Activated naive CD4-positive, alpha-beta T cell treated with anti-CD3 and anti-CD28 coated beads for 36 hours (primary cell): ENCODE measurements at regions of chr20 and their contacts with region 1.

Region 1: DNA sequence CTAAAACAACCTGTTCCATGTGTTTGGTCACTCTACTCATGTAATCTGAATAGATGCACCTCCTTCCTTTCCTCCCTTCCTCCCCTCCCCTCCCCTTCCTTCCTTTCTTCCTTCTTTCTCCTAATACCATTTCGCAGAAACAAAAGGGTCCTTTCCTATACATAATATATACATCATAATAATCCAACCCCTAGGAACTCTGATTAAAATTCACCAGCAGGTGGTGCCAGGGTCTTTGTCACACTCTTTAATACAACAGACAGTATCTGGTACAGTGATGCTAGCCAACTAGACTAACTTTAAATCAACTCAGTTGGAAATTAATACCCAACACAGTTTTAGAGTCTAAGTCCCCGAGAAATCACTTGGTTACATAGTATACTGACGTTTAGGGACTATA is 181.2 kb upstream of the SHLD1 start:
- DNase-seq: peak; percentile 78
- H3K4me3 Mint-ChIP-seq: no peak overlapping the region
- H3K27ac Mint-ChIP-seq: peak overlapping the region; percentile 82
- H3K4me1 Mint-ChIP-seq: peaks cover 31% of the 10 kb centered on the region
- H3K27me3 Mint-ChIP-seq: no peaks in the 10 kb centered on the region

Region 2: GRCh38 chr20:5557123-5557522 is 11.9 kb before region 1 on chr20:
- CTCF ChIA-PET with region 1: interaction called, 34 read pairs
- intact Hi-C with region 1: no loop called
- DNase-seq: peak; percentile 80
- H3K4me3 Mint-ChIP-seq: no peak overlapping the region
- H3K27ac Mint-ChIP-seq: peak overlapping the region; percentile 67
- H3K4me1 Mint-ChIP-seq: peaks cover 4% of the 10 kb centered on the region
- H3K27me3 Mint-ChIP-seq: no peaks in the 10 kb centered on the region

Region 3: GRCh38 chr20:5580936-5581708 is 12.1 kb after region 1 on chr20:
- CTCF ChIA-PET with region 1: interaction called, 11 read pairs
- intact Hi-C with region 1: no loop called
- DNase-seq: no peak
- H3K4me3 Mint-ChIP-seq: no peak overlapping the region
- H3K27ac Mint-ChIP-seq: no peak overlapping the region
- H3K4me1 Mint-ChIP-seq: peaks cover 17% of the 10 kb centered on the region
- H3K27me3 Mint-ChIP-seq: no peaks in the 10 kb centered on the region

Region 4: DNA sequence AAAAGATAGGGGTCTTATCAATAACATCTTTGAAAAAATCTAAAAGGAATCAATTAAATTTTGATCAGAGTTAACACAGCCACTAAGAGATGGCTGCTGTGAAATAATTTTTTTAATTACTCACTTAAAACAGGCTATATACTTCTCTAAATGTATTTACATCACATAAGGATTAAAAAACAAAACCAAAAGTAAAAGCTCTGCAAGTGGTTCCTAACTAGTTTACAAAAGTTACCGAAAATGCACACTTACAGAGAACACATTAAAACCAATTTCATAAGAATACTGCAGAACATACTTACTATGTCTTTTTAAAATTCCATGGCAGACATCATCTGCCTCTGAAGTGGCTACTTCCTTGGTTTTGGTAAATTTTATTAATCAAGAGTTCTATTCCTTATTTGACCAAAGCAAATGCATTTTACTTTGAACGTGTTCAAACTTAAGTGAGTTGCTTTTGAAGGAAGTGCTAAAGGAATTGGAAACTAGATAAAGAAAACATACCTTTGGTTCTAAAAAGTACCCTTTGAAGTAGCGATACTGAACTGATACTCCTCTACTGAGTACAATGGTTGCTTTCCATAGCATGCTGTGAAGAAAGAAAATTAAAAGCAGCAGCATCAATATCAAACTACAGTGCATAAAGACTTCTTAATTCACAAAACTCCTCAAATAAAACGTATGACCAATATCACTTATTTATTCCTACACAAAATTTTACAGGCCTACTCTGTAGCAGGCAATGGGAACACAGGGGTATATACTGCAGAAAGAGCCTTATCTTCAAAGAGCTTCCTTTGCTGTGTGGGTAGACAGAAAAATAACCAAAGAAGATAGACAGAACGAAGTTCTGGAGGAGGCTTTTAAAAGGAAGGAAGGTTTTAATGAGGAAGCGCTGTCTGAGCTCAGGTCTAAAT is 24.1 kb after region 1 on chr20:
- CTCF ChIA-PET with region 1: interaction called, 4 read pairs
- intact Hi-C with region 1: loop called (anchors 1 kb)
- DNase-seq: no peak
- H3K4me3 Mint-ChIP-seq: peak overlapping the region; percentile 69
- H3K27ac Mint-ChIP-seq: peak overlapping the region; percentile 95
- H3K4me1 Mint-ChIP-seq: peaks cover 78% of the 10 kb centered on the region
- H3K27me3 Mint-ChIP-seq: no peaks in the 10 kb centered on the region

Region 5: DNA sequence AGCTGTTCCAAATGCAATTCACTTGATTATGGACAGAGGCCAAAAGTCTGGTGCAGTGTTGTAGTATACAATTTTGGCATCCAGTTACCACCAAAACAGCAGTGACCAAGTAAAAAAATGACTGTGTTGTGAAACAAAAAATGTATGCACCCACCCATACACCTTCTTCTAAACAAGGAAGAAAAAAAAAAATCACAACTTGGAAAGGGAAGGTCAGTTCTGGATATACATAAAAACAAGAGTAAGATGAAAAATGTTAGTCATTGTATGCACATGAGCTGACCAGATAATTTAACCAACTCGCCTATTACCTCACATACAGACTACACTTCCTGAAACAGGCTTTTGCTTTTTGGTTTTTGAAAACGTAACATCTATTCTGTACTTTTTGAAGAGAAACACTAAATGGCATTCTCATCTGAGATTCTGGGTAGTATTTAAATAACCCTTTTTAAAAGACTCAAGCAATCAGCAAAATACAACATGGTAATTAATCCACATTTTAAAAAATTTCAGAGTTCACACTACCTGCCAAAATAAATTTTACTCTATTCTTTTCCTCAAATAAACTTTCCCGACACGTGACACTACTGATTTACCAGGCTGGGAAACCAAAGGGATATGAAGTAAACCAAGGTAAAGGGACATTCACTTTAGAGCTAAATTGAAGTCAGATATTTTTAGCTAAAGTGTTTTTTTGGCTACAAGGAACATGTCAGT is 39.6 kb after region 1 on chr20:
- CTCF ChIA-PET with region 1: interaction called, 17 read pairs
- intact Hi-C with region 1: no loop called
- DNase-seq: no peak
- H3K4me3 Mint-ChIP-seq: peak overlapping the region; percentile 92
- H3K27ac Mint-ChIP-seq: peak overlapping the region; percentile 99
- H3K4me1 Mint-ChIP-seq: peaks cover 57% of the 10 kb centered on the region
- H3K27me3 Mint-ChIP-seq: no peaks in the 10 kb centered on the region

Region 6: GRCh38 chr20:5735845-5736525 is 167.0 kb after region 1 on chr20:
- CTCF ChIA-PET with region 1: interaction called, 3 read pairs
- intact Hi-C with region 1: loop called (anchors 1 kb)
- DNase-seq: no peak
- H3K4me3 Mint-ChIP-seq: no peak overlapping the region
- H3K27ac Mint-ChIP-seq: no peak overlapping the region
- H3K4me1 Mint-ChIP-seq: peaks cover 28% of the 10 kb centered on the region
- H3K27me3 Mint-ChIP-seq: no peaks in the 10 kb centered on the region

Region 7: GRCh38 chr20:5788385-5788895 is 219.4 kb after region 1 on chr20:
- CTCF ChIA-PET with region 1: interaction called, 122 read pairs
- intact Hi-C with region 1: loop called (anchors 1 kb)
- DNase-seq: peak; percentile 90
- H3K4me3 Mint-ChIP-seq: no peak overlapping the region
- H3K27ac Mint-ChIP-seq: no peak overlapping the region
- H3K4me1 Mint-ChIP-seq: peaks cover 6% of the 10 kb centered on the region
- H3K27me3 Mint-ChIP-seq: no peaks in the 10 kb centered on the region